ENCODE measurements at regions of chr17 and their contacts with region 1.

Region 1: GRCh38 chr17:82022981-82023374 is at the start of gene LRRC45:
- DNase-seq: peak; percentile 100
- H3K4me3 ChIP-seq: peak within 1 kb of the TSS; percentile 50 to 70 (median 60)
- H3K27ac ChIP-seq: peak within 1 kb of the TSS; percentile 21
- H3K4me1 ChIP-seq: peaks cover 12% of the 10 kb centered on the region
- H3K27me3 ChIP-seq: no peaks in the 10 kb centered on the region
- CTCF ChIP-seq: no peak
- POLR2A ChIP-seq: no peak
- total RNA-seq, gene LRRC45: 18.6 and 22.9 TPM in 2 replicates

Region 2: DNA sequence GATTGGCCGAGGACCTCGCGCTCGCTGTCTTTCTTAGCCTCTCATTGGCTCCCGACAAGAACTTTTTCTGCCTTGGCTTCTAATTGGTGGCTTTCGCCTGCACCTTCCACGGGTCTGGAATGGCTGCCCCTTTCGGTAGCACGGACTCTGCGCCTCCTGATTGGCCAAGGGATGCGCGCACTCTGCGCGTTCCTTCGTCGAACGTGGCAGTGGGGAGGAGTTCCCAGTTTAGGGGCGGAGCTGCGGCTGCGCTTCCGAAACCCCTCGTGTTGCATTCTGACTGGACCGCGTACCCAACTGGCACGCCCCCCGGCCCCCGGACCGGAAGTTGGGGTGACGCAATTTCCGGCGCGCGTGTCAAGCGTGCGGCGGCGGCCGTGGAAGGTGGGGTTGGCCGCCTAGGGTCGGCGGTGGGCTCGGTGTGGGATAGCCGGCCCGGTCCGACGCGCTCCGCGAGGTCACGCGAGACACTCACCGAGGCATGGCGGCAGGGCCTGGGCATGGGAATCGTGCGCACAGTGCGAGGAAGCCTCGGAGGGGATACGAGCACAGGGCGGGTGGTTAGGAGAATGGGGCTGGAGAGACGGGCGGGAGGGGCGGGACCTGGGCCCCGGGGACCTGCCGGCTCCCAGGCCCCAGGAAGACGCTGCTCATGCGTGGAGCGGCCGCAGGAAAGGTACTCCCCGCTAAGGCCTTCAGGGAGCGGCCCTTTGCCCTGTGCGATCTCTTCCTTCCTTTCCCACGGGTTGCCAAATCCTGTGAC is 162.0 kb before region 1 on chr17:
- CTCF ChIA-PET with region 1: no interaction called
- POLR2A ChIA-PET with region 1: no interaction called
- dilution Hi-C with region 1: no loop called
- intact Hi-C with region 1: loop called (anchors 2 kb)
- DNase-seq: peak; percentile 100
- H3K4me3 ChIP-seq: peak overlapping the region in 2 of 3 experiments; percentile 39 to 61
- H3K27ac ChIP-seq: peak overlapping the region; percentile 80
- H3K4me1 ChIP-seq: peaks cover 20% of the 10 kb centered on the region
- H3K27me3 ChIP-seq: no peaks in the 10 kb centered on the region
- CTCF ChIP-seq: no peak
- POLR2A ChIP-seq: peak; percentile 95

Region 3: GRCh38 chr17:81927653-81928543 is 95.1 kb before region 1 on chr17 and contains the start of gene MAFG:
- CTCF ChIA-PET with region 1: interaction called, 8 read pairs
- POLR2A ChIA-PET with region 1: no interaction called
- dilution Hi-C with region 1: no loop called
- intact Hi-C with region 1: loop called (anchors 2 kb)
- DNase-seq: peak; percentile 97
- H3K4me3 ChIP-seq: peak within 1 kb of the TSS; percentile 17 to 64 (median 49)
- H3K27ac ChIP-seq: peak within 1 kb of the TSS; percentile 77
- H3K4me1 ChIP-seq: peaks cover 17% of the 10 kb centered on the region
- H3K27me3 ChIP-seq: no peaks in the 10 kb centered on the region
- CTCF ChIP-seq: peak; percentile 29 to 47
- POLR2A ChIP-seq: peak; percentile 57
- total RNA-seq, gene MAFG: 30.5 and 35.0 TPM in 2 replicates

Region 4: DNA sequence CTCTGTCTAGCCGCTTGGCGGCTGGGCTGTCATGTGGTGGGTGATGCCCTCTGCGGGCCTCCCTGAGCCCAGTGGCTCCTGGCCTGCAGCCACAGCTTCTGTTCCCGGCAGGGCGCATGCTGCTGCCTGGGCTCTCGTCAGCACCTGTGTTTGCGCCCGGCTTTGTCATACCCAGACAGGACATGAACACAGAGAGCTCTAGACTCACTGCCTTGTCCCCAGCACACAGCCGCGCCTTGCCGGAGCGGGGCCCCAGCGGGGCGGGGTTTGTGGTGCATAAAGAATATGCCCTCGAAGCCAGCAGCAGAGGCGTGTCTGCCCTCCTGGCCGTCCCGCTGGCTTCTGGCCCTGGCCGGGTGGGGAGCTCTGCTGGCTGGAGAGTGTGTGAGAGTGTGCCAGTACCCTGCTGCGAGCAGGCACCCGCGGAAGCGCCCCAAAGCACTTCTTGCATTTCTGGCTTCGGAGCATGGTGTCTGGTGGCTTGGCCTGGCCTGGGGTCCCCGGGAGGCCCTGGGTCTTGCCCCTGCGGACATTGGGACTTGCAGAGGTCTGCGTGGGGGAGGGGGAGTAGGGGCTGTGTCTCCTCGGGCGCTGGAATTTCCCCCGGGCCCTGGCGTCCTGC is 31.2 kb before region 1 on chr17:
- CTCF ChIA-PET with region 1: interaction called, 12 read pairs
- POLR2A ChIA-PET with region 1: no interaction called
- dilution Hi-C with region 1: no loop called
- intact Hi-C with region 1: no loop called
- DNase-seq: peak; percentile 36
- H3K4me3 ChIP-seq: no peak overlapping the region
- H3K27ac ChIP-seq: no peak overlapping the region
- H3K4me1 ChIP-seq: peaks cover 2% of the 10 kb centered on the region
- H3K27me3 ChIP-seq: no peaks in the 10 kb centered on the region
- CTCF ChIP-seq: no peak
- POLR2A ChIP-seq: no peak

Region 5: GRCh38 chr17:82037113-82037888 is 14.3 kb after region 1 on chr17 and contains the start of gene DCXR:
- CTCF ChIA-PET with region 1: interaction called, 14 read pairs
- POLR2A ChIA-PET with region 1: no interaction called
- dilution Hi-C with region 1: no loop called
- intact Hi-C with region 1: loop called (anchors 1 kb)
- DNase-seq: peak; percentile 97
- H3K4me3 ChIP-seq: peak within 1 kb of the TSS; percentile 58 to 71 (median 69)
- H3K27ac ChIP-seq: peak within 1 kb of the TSS; percentile 36
- H3K4me1 ChIP-seq: peaks cover 9% of the 10 kb centered on the region
- H3K27me3 ChIP-seq: no peaks in the 10 kb centered on the region
- CTCF ChIP-seq: peak; percentile 87 to 92
- POLR2A ChIP-seq: peak; percentile 80
- total RNA-seq, gene DCXR: 75.2 and 93.0 TPM in 2 replicates

Region 6: DNA sequence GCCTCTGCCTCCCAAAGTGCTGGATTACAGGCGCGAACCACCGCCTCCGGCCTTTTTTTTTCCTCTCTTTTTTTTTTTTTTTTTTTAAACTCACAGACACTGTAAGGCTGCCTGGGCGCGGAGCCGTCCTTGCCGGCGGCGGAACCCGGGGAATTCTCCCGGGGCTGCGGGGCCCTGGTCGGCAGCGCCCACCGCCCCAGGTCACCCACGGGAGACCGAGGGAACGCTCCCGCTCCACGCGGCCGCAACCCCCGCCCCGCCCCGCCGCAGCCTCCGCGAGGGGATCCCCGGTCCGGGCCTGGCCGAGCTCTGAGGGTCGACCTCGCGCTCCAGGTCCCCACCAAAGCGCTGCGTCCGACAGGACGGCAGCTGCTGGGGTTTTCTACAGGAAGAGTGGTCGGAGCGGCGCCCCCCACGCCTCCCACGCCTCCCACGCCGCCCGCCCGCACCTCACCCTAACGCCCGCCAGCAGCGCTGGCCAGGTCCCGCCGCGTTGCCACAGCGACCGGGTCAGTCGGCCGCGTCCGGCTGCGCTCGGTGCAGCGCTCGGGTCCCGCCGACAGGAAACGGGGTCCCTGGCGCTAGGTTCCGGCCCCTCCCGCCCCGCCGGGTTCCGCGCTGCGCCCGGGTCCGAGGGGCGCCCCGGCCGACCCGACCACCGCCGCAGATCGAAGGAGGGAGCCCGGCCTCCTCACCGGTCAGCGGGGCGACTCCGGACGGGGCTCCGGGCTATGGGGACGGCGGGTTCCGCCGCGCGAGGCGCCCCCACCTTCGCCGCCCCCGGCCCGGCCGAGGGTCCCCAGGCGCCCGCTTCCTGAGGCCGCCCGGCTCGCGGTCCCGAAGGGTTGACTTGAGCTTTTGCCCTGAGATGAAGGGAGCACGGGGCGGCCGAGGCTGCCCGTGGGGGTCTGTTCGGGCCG is 189.6 kb after region 1 on chr17 and contains the start of gene CCDC57:
- CTCF ChIA-PET with region 1: no interaction called
- POLR2A ChIA-PET with region 1: no interaction called
- dilution Hi-C with region 1: no loop called
- intact Hi-C with region 1: loop called (anchors 10 kb)
- DNase-seq: peak; percentile 62
- H3K4me3 ChIP-seq: peak within 1 kb of the TSS; percentile 59 to 70 (median 62)
- H3K27ac ChIP-seq: peak within 1 kb of the TSS; percentile 72
- H3K4me1 ChIP-seq: peaks cover 29% of the 10 kb centered on the region
- H3K27me3 ChIP-seq: no peaks in the 10 kb centered on the region
- CTCF ChIP-seq: no peak
- POLR2A ChIP-seq: peak; percentile 36
- total RNA-seq, gene CCDC57: 31.6 and 40.9 TPM in 2 replicates

Measured in endothelial cell of umbilical vein (primary cell).